PC-9 (cell line): ENCODE measurements at regions of chr19 and their contacts with region 1.

Region 1: GRCh38 chr19:11264452-11265176 is 2.3 kb upstream of the DOCK6 start:
- DNase-seq: peak; percentile 90 to 94
- H3K4me3 ChIP-seq: no peak overlapping the region
- H3K27ac ChIP-seq: peak overlapping the region; percentile 62
- H3K4me1 ChIP-seq: peaks cover 24% of the 10 kb centered on the region
- H3K27me3 ChIP-seq: no peaks in the 10 kb centered on the region
- CTCF ChIP-seq: no peak

Region 2: GRCh38 chr19:10332955-10333757 is 931.5 kb before region 1 on chr19 and contains the start of gene RAVER1:
- CTCF ChIA-PET with region 1: no interaction called
- POLR2A ChIA-PET with region 1: interaction called, 13 read pairs
- intact Hi-C with region 1: no loop called
- DNase-seq: peak; percentile 91 to 95
- H3K4me3 ChIP-seq: peak within 1 kb of the TSS; percentile 78
- H3K27ac ChIP-seq: peak within 1 kb of the TSS; percentile 55
- H3K4me1 ChIP-seq: peaks cover 10% of the 10 kb centered on the region
- H3K27me3 ChIP-seq: no peaks in the 10 kb centered on the region
- CTCF ChIP-seq: no peak
- total RNA-seq, gene RAVER1: 52.9 and 83.9 TPM in 2 replicates

Region 3: GRCh38 chr19:11279496-11280236 is 15.1 kb after region 1 on chr19:
- CTCF ChIA-PET with region 1: no interaction called
- POLR2A ChIA-PET with region 1: no interaction called
- intact Hi-C with region 1: no loop called
- DNase-seq: no peak
- H3K4me3 ChIP-seq: no peak overlapping the region
- H3K27ac ChIP-seq: no peak overlapping the region
- H3K4me1 ChIP-seq: no peaks in the 10 kb centered on the region
- H3K27me3 ChIP-seq: no peaks in the 10 kb centered on the region; the same call in 1 of the 2 replicates
- CTCF ChIP-seq: no peak